PC-3 (cell line): ENCODE measurements at regions of chr1 and their contacts with region 1.

Region 1: GRCh38 chr1:245622332-245623023 is 467.7 kb downstream of the KIF26B start:
- DNase-seq: no peak
- ATAC-seq: no peak
- H3K4me3 ChIP-seq: no peak overlapping the region
- H3K27ac ChIP-seq: no peak overlapping the region
- H3K4me1 ChIP-seq: no peaks in the 10 kb centered on the region
- H3K27me3 ChIP-seq: peaks cover 65% of the 10 kb centered on the region
- CTCF ChIP-seq: no peak

Region 2: DNA sequence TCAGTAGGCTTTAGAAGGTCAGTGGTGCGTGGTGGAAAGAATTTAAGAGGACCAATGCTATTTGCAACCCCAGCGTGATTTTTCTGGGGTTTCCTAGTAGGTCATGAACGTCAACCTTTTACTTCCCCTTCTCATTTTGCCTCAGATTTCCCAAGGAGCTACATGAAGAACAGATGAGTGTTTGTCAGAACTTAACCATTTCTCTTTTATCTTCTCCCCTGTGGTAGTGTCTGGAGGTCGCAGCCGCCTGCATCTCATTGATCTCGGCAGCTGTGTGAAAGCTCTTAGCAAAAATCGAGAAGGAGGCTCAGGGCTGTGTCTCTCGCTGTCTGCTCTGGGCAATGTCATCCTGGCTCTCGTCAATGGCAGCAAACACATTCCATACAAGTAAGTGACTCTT is 23.4 kb after region 1 on chr1:
- CTCF ChIA-PET with region 1: no interaction called
- POLR2A ChIA-PET with region 1: no interaction called
- intact Hi-C with region 1: no loop called
- DNase-seq: no peak
- ATAC-seq: no peak
- H3K4me3 ChIP-seq: no peak overlapping the region
- H3K27ac ChIP-seq: no peak overlapping the region
- H3K4me1 ChIP-seq: no peaks in the 10 kb centered on the region
- H3K27me3 ChIP-seq: peaks cover 56% of the 10 kb centered on the region
- CTCF ChIP-seq: no peak

Region 3: GRCh38 chr1:245656189-245656717 is 33.8 kb after region 1 on chr1:
- CTCF ChIA-PET with region 1: no interaction called
- POLR2A ChIA-PET with region 1: no interaction called
- intact Hi-C with region 1: no loop called
- DNase-seq: no peak
- ATAC-seq: no peak
- H3K4me3 ChIP-seq: no peak overlapping the region
- H3K27ac ChIP-seq: no peak overlapping the region
- H3K4me1 ChIP-seq: no peaks in the 10 kb centered on the region
- H3K27me3 ChIP-seq: peaks cover 74% of the 10 kb centered on the region
- CTCF ChIP-seq: no peak

Region 4: GRCh38 chr1:245874942-245875580 is 252.6 kb after region 1 on chr1:
- CTCF ChIA-PET with region 1: interaction called, 15 read pairs
- POLR2A ChIA-PET with region 1: no interaction called
- intact Hi-C with region 1: no loop called
- DNase-seq: no peak
- ATAC-seq: no peak
- H3K4me3 ChIP-seq: no peak overlapping the region
- H3K27ac ChIP-seq: no peak overlapping the region
- H3K4me1 ChIP-seq: no peaks in the 10 kb centered on the region
- H3K27me3 ChIP-seq: no peaks in the 10 kb centered on the region
- CTCF ChIP-seq: no peak